ENCODE measurements at regions of chr9 and their contacts with region 1.

Region 1: GRCh38 chr9:36328798-36329411 is 70.7 kb upstream of the GNE start:
- DNase-seq: peak; percentile 46 to 64 (median 60)
- H3K4me3 ChIP-seq: no peak overlapping the region
- H3K4me3 Mint-ChIP-seq: peak overlapping the region in 2 of 8 donors; percentile 29 to 48
- H3K27ac ChIP-seq: no peak overlapping the region
- H3K27ac Mint-ChIP-seq: no peak overlapping the region
- H3K4me1 ChIP-seq: no peaks in the 10 kb centered on the region
- H3K4me1 Mint-ChIP-seq: peaks cover 0 to 4% (median 3%) of the 10 kb centered on the region in 4 donors
- H3K27me3 ChIP-seq: no peaks in the 10 kb centered on the region
- H3K27me3 Mint-ChIP-seq: no peaks in the 10 kb centered on the region

Region 2: DNA sequence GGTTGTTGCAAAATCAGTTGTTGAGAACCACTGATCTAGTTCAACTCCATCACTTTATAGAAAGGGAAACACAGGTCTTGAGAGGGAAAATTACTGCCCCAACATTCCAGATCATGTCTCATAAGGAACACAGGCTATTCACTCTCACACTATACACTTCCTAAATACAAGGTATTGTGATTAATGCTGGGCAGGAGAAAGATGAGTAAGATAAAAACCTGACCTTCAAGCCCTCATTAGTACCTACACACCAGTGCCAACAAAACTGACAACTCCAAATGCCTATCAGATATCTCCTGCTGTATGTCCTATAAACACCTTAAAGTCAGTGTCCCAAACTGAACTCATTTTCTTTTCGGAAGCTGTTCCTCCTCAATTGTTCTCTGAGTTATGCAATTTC is 78.8 kb before region 1 on chr9:
- CTCF ChIA-PET with region 1: interaction called, 113 read pairs
- POLR2A ChIA-PET with region 1: interaction called, 3 read pairs
- intact Hi-C with region 1: loop called (anchors 1 kb)
- DNase-seq: no peak
- H3K4me3 ChIP-seq: no peak overlapping the region
- H3K4me3 Mint-ChIP-seq: no peak overlapping the region
- H3K27ac ChIP-seq: no peak overlapping the region
- H3K27ac Mint-ChIP-seq: peak overlapping the region in 1 of 7 donors; percentile 69
- H3K4me1 ChIP-seq: no peaks in the 10 kb centered on the region
- H3K4me1 Mint-ChIP-seq: peaks cover 9 to 20% (median 14%) of the 10 kb centered on the region in 4 donors
- H3K27me3 ChIP-seq: no peaks in the 10 kb centered on the region
- H3K27me3 Mint-ChIP-seq: no peaks in the 10 kb centered on the region

Region 3: DNA sequence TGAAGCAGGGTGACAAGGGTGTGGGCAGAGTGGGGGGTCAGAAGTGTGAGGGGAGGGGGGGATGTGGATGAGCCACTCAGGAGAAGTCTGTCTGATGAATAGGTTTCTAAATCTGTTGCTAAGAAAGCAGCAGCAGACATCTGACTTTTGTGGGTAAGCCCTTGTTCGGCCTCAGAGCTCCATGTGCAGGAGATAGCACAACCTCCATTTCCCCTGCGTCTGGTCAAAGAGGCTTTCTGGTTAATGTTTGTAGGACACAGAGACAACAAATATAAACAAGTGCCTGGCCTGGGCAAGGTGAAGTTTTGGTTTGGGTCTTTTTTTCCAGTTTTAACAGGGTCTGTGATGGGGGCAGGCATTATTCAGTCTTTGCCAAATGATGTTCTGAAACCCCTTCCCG is 13.6 kb before region 1 on chr9:
- CTCF ChIA-PET with region 1: interaction called, 20 read pairs
- POLR2A ChIA-PET with region 1: no interaction called
- intact Hi-C with region 1: no loop called
- DNase-seq: no peak
- H3K4me3 ChIP-seq: no peak overlapping the region
- H3K4me3 Mint-ChIP-seq: no peak overlapping the region
- H3K27ac ChIP-seq: no peak overlapping the region
- H3K27ac Mint-ChIP-seq: peak overlapping the region in 2 of 7 donors; percentile 14 to 35
- H3K4me1 ChIP-seq: no peaks in the 10 kb centered on the region
- H3K4me1 Mint-ChIP-seq: peaks cover 0 to 4% (median under 1%) of the 10 kb centered on the region in 4 donors
- H3K27me3 ChIP-seq: no peaks in the 10 kb centered on the region
- H3K27me3 Mint-ChIP-seq: peaks cover 0 to 3% of the 10 kb centered on the region in 2 donors